ENCODE measurements at regions of chr5 and their contacts with region 1.

Region 1: GRCh38 chr5:170638454-170639220 is 134.8 kb downstream of the KCNIP1 start:
- DNase-seq: peak; percentile 44
- H3K4me3 ChIP-seq: no peak overlapping the region
- H3K27ac ChIP-seq: no peak overlapping the region
- H3K4me1 ChIP-seq: peaks cover 14% of the 10 kb centered on the region
- H3K27me3 ChIP-seq: peaks cover 2 to 5% of the 10 kb centered on the region in 2 experiments
- CTCF ChIP-seq: peak; percentile 79 to 83
- POLR2A ChIP-seq: no peak

Region 2: GRCh38 chr5:168992705-168993104 is 1645.9 kb before region 1 on chr5:
- CTCF ChIA-PET with region 1: no interaction called
- POLR2A ChIA-PET with region 1: no interaction called
- dilution Hi-C with region 1: no loop called
- intact Hi-C with region 1: no loop called
- DNase-seq: no peak
- H3K4me3 ChIP-seq: no peak overlapping the region
- H3K27ac ChIP-seq: no peak overlapping the region
- H3K4me1 ChIP-seq: no peaks in the 10 kb centered on the region
- H3K27me3 ChIP-seq: peaks cover 0 to 6% of the 10 kb centered on the region in 2 experiments
- CTCF ChIP-seq: no peak
- POLR2A ChIP-seq: no peak

Region 3: DNA sequence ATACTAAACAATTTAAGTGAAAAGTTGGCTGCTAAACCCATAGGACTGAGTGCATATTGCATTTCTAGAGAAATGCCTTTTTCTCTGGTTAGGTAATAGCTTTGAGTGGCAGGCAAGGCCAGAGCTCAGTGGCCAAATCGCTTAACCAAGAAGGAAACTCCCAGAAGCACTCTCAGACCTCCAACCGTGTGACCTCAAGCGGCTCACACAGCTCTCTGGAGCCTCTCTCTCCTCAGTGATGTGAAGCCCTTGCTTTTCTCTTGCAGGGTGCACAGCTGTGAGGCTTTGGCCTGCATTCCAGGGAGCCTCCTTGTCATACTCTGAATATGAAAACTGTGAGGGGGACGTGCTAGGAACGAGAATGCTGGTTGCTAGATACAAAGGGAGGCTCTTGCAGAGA is 765.0 kb before region 1 on chr5:
- CTCF ChIA-PET with region 1: no interaction called
- POLR2A ChIA-PET with region 1: no interaction called
- dilution Hi-C with region 1: no loop called
- intact Hi-C with region 1: no loop called
- DNase-seq: no peak
- H3K4me3 ChIP-seq: no peak overlapping the region
- H3K27ac ChIP-seq: no peak overlapping the region
- H3K4me1 ChIP-seq: no peaks in the 10 kb centered on the region
- H3K27me3 ChIP-seq: no peaks in the 10 kb centered on the region
- CTCF ChIP-seq: no peak
- POLR2A ChIP-seq: no peak

Region 4: GRCh38 chr5:170709640-170710039 is 71.0 kb after region 1 on chr5:
- CTCF ChIA-PET with region 1: no interaction called
- POLR2A ChIA-PET with region 1: no interaction called
- dilution Hi-C with region 1: no loop called
- intact Hi-C with region 1: loop called (anchors 2 kb)
- DNase-seq: no peak
- H3K4me3 ChIP-seq: no peak overlapping the region
- H3K27ac ChIP-seq: no peak overlapping the region
- H3K4me1 ChIP-seq: no peaks in the 10 kb centered on the region
- H3K27me3 ChIP-seq: peaks cover 0 to 1% of the 10 kb centered on the region in 2 experiments
- CTCF ChIP-seq: no peak
- POLR2A ChIP-seq: no peak

Region 5: DNA sequence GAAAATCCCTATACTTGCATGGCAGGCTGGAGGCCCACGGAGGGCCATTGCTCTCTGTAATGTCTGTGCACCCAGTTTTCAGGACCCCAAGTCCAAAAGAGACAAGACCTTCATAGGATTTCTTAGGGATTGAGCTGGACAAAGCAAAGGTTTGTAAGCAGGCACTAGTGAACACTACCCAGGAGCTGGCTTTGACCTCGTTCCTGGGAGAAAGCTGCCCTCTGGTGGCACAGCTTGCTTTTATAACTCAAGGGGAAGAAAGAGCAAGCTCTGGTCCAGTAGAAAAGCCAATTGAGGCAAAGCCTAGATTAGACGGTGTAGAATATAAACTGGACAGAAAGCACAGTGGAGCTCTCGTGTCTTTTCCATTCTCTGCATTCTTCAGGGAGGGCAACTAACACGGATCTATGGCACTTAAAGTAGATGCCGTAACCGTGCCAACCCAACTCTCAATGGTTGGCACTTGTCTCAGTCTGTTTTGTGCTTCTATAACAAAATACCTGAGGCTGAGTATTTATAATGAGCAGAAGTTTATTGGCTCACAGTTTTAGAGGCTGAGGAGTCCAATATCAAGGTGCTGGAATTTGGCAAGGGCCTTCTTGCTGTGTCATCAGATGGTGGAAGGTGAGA is 152.8 kb after region 1 on chr5:
- CTCF ChIA-PET with region 1: interaction called, 112 read pairs
- POLR2A ChIA-PET with region 1: interaction called, 3 read pairs
- dilution Hi-C with region 1: no loop called
- intact Hi-C with region 1: loop called (anchors 1 kb)
- DNase-seq: peak; percentile 66
- H3K4me3 ChIP-seq: no peak overlapping the region
- H3K27ac ChIP-seq: no peak overlapping the region
- H3K4me1 ChIP-seq: no peaks in the 10 kb centered on the region
- H3K27me3 ChIP-seq: no peaks in the 10 kb centered on the region
- CTCF ChIP-seq: peak; percentile 64 to 69
- POLR2A ChIP-seq: no peak

Region 6: DNA sequence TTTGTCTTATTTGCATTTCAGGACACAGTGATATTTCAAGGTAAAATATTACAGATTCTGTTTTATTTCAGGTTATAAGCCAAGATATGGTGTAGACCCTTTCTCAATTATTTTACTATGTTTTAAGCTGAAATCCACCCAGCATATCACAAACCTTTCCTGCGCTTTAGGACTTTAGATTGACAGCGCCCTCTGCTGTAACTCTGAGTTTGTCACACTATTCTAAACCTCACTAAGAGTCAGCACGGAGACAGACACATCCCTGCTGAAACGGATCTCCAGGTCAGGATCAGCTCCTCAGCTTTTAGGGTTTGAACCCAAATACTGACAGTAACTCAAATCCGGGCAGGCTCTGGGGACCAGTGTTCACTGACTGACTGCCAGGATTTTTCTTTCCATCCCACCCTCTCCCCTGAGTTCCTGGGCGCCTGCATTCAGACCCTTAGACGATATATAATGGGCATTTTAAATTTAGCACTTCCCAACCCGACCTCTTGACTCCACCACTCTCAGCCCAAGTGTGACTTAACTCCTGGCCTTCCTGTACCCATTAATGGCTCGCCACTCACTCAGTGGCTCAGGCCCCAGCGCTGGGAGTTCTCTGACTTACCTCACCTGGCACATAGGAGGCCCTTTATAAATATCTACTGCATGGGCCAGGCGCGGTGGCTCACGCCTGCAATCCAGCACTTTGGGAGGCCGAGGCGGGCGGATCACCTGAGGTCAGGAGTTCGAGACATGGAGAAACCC is 703.9 kb after region 1 on chr5:
- CTCF ChIA-PET with region 1: interaction called, 6 read pairs
- POLR2A ChIA-PET with region 1: no interaction called
- dilution Hi-C with region 1: no loop called
- intact Hi-C with region 1: loop called (anchors 2 kb)
- DNase-seq: peak; percentile 64
- H3K4me3 ChIP-seq: no peak overlapping the region
- H3K27ac ChIP-seq: no peak overlapping the region
- H3K4me1 ChIP-seq: no peaks in the 10 kb centered on the region
- H3K27me3 ChIP-seq: no peaks in the 10 kb centered on the region
- CTCF ChIP-seq: peak; percentile 57 to 61
- POLR2A ChIP-seq: no peak

Measured in endothelial cell of umbilical vein (primary cell).